Activated CD8-positive, alpha-beta T cell treated with anti-CD3 and anti-CD28 coated beads for 36 hours (primary cell): ENCODE measurements at regions of chr10 and their contacts with region 1.

Region 1: DNA sequence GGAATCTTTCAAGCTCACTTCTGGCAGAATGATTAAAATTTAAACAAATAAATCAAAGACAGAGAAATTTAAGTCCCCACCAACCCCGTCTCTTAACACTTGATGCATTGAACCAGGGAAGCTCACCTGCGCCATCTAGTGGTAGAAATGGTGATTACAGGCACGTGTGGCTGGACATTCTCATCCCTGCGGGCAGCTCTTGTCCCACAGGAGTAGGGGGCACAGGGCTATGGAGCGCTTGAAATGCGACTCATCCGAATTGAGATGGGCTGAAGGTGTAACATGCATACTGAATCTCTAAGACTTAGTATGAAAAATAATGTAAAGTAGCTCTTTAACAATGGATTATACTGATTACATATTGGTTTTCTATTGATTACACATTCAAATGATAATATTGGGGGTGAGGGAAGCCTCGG is 24.8 kb upstream of the SLIT1 start:
- DNase-seq: peak; percentile 84
- ATAC-seq: peak; percentile 78
- H3K4me3 Mint-ChIP-seq: no peak overlapping the region
- H3K27ac Mint-ChIP-seq: no peak overlapping the region
- H3K4me1 Mint-ChIP-seq: no peaks in the 10 kb centered on the region
- H3K27me3 Mint-ChIP-seq: no peaks in the 10 kb centered on the region
- CTCF ChIP-seq: peak; percentile 99

Region 2: DNA sequence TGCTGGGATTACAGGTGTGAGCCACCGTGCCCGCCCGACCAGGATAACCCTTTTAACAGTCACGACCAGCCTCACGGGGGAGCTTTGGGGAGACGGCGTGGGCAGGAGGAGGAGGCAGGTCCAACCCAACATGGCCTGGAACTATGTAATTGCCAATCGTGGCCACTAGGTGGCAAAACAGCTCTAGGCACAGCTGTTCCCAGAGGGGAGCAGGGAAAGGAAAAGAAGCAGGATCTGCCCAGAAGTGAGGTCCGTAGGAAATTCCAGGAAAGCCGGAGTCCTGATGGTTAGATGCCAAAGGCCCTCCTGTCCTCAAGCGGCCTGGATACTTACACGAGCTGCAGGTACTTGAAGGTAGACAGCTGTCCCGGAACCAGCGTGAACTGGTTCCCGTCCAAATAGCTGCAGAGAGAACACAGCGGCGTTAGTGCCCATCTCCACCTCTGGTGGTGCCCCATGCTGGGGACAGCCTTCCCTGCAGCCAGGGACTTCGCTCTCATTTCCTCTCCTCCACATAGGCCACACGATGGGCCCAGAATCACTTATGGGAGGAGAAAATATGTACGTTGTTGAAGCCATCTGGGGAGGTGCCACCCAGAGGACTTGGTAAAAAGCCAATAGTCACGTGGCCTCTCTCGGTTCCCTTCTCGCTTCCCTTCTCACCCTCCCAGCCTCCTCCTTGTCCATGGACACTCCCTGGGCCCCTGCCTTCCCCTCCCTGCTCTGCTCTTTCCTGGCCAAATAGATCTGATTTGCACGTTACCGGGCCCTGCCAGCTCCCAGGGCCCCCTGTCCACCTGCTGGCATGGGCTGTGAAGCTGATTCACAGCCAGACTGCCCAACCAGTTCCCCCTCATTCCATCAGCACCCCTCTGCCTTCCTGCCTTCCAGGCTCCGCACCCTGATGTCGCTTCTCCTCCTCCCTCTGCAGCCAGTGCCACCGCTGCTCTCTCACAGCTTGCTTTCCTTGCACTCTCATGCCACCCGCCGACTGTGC is 172.9 kb before region 1 on chr10:
- CTCF ChIA-PET with region 1: interaction called, 55 read pairs
- POLR2A ChIA-PET with region 1: no interaction called
- intact Hi-C with region 1: no loop called
- DNase-seq: peak; percentile 85
- ATAC-seq: peak; percentile 98
- H3K4me3 Mint-ChIP-seq: peak overlapping the region; percentile 46
- H3K27ac Mint-ChIP-seq: no peak overlapping the region
- H3K4me1 Mint-ChIP-seq: peaks cover 9% of the 10 kb centered on the region
- H3K27me3 Mint-ChIP-seq: peaks cover 8% of the 10 kb centered on the region
- CTCF ChIP-seq: peak; percentile 97

Region 3: DNA sequence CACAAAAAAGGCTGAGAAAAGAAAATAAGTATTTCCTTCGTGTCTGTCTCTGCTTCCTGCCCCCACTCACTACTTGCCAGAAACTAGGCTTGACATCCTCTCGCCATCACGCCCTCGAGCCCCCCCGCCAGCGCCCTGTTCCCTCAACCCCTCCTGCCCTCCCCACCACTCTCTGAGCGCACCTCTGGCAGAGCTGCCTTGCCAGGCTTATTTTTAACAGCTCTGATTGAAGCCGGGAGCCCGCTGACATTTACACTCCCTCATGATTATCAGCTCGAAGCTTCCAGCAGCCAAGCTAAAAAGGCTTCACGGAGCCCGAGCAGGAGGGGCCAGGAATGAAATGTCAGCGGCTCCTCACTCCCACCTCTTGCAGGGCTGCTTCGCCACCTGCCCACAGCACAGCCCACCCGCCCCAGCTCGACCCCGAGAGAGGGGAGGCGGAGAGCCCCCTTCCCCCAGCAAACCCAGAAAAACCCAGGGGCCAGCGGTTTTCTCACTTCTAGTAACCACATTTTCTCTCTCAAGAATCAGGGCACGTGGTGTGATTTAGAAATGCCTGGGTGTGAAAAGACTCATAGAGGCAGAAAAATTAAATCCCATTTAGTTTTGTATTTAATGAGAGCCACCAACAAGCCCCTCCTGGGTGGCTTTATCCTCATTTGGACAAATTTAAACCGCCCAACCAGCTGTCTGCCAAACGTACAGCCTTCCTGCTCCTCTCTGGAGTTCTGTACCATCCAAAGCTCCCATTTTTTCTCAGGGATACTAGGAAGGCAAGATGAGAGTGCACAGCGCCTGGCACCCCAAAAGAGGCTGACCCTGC is 114.1 kb before region 1 on chr10:
- CTCF ChIA-PET with region 1: interaction called, 13 read pairs
- POLR2A ChIA-PET with region 1: no interaction called
- intact Hi-C with region 1: no loop called
- DNase-seq: peak; percentile 61
- ATAC-seq: peak; percentile 79
- H3K4me3 Mint-ChIP-seq: no peak overlapping the region
- H3K27ac Mint-ChIP-seq: no peak overlapping the region
- H3K4me1 Mint-ChIP-seq: peaks cover 28% of the 10 kb centered on the region
- H3K27me3 Mint-ChIP-seq: peaks cover 15% of the 10 kb centered on the region
- CTCF ChIP-seq: no peak

Region 4: DNA sequence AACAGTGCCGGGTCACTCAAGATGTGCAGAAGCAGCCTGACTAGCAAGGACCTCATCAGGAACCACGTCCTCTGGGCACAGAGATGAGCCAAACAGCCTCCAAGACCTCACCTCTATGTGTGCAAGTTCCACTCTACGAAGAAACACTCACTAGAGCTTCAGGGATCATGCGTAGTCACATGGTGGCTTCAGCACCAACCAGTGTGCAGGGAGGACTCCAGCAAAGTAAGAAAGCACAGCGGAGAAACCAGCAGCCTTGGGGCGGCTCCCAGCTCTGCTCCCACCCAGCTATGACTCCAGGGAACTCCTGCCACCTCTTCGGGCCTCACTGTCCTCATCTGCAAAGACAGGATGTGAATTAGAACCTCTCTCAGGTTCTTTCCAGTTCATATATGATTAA is 83.0 kb before region 1 on chr10:
- CTCF ChIA-PET with region 1: interaction called, 10 read pairs
- POLR2A ChIA-PET with region 1: no interaction called
- intact Hi-C with region 1: no loop called
- DNase-seq: no peak
- ATAC-seq: no peak
- H3K4me3 Mint-ChIP-seq: no peak overlapping the region
- H3K27ac Mint-ChIP-seq: no peak overlapping the region
- H3K4me1 Mint-ChIP-seq: no peaks in the 10 kb centered on the region
- H3K27me3 Mint-ChIP-seq: peaks cover 2% of the 10 kb centered on the region
- CTCF ChIP-seq: no peak

Region 5: GRCh38 chr10:97179731-97180362 is 30.7 kb before region 1 on chr10:
- CTCF ChIA-PET with region 1: interaction called, 29 read pairs
- POLR2A ChIA-PET with region 1: no interaction called
- intact Hi-C with region 1: no loop called
- DNase-seq: no peak
- ATAC-seq: no peak
- H3K4me3 Mint-ChIP-seq: no peak overlapping the region
- H3K27ac Mint-ChIP-seq: no peak overlapping the region
- H3K4me1 Mint-ChIP-seq: peaks cover 2% of the 10 kb centered on the region
- H3K27me3 Mint-ChIP-seq: peaks cover 31% of the 10 kb centered on the region
- CTCF ChIP-seq: no peak

Region 6: DNA sequence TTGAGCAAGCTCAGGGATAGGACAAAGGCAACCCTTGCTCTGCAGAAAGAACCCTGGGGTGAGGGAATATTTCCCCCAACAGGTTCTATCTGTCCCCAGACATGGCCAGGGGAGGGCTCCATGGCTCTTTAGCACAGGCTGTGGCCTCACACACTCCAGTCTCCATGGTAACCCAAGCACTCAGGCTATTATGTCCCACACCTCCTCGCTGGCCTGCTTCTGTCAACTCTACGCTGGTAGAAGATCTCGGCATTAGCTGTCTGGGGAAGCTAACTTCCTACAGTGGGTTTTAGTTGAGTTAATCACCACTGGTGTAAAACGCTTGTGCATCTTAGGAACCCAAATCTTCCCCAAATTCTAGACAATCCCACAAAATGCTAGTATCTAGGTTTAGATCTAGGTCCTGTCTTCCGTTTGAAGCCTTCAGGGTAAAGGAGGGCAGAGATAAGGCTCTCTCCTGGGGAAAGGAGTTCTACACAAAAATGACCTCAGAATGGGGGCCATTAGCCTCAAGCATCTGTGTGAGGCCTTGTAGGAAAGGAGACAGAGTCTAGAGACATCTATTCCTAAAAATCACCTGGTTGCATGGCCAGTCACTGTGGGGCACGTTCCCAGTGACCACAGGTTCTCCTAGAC is 11.9 kb after region 1 on chr10:
- CTCF ChIA-PET with region 1: interaction called, 42 read pairs
- POLR2A ChIA-PET with region 1: interaction called, 4 read pairs
- intact Hi-C with region 1: no loop called
- DNase-seq: no peak
- ATAC-seq: no peak
- H3K4me3 Mint-ChIP-seq: no peak overlapping the region
- H3K27ac Mint-ChIP-seq: no peak overlapping the region
- H3K4me1 Mint-ChIP-seq: peaks cover 24% of the 10 kb centered on the region
- H3K27me3 Mint-ChIP-seq: no peaks in the 10 kb centered on the region
- CTCF ChIP-seq: no peak

Region 7: GRCh38 chr10:97292097-97292862 is 81.7 kb after region 1 on chr10 and contains the start of gene ARHGAP19:
- CTCF ChIA-PET with region 1: no interaction called
- POLR2A ChIA-PET with region 1: no interaction called
- intact Hi-C with region 1: no loop called
- DNase-seq: peak; percentile 98
- ATAC-seq: peak; percentile 99
- H3K4me3 Mint-ChIP-seq: peak within 1 kb of the TSS; percentile 88
- H3K27ac Mint-ChIP-seq: peak within 1 kb of the TSS; percentile 87
- H3K4me1 Mint-ChIP-seq: peaks cover 16% of the 10 kb centered on the region
- H3K27me3 Mint-ChIP-seq: peaks cover 2% of the 10 kb centered on the region
- CTCF ChIP-seq: no peak
- total RNA-seq, gene ARHGAP19: 42.3 to 53.2 TPM